Dendritic cell treated with granulocyte-macrophage colony-stimulating factor and Interleukin-4, amounts not matched to agents 40 ng/mL and 50 ng/mL, for 4 days (primary cell): ENCODE measurements at regions of chr14 and their contacts with region 1.

Region 1: DNA sequence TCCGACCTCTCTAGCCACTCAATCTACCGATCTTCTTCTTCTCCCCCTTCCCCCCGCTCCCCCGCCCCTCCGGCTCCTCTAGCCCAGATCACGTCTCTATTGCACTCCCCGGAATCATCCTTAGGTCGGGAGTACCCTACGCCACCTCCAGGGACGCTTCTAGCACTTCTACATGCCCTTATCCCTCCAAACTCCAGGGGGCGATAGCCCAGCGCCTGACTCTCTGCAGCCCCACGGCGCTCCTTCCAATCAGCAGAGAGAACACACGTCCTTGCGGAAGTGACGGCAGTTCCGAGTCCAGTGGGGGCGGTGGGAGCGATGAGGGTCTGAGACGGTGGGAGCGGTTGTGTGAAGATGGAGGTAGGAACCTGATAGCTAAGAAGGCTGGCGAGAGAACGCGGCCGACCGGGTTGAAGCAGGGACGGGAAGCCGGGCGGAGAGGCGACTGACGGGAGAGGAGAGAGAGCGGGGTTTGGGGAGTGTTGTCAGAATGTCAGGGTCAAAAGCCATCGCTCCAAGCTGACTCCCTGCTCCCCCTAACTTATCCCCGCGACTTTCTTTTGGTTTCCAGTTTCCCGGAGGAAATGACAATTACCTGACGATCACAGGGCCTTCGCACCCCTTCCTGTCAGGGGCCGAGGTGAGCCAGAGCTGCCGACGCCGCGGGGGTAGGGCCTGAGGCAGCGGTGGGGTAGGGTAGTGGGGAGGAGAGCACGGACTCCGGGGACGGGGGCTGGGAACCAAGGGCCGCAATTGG is at the starts of genes RAB2B and TOX4:
- H3K4me3 Mint-ChIP-seq: peak within 1 kb of the TSS; percentile 100
- H3K27ac Mint-ChIP-seq: peak within 1 kb of the TSS; percentile 99
- H3K4me1 Mint-ChIP-seq: peaks cover 27% of the 10 kb centered on the region
- H3K27me3 Mint-ChIP-seq: no peaks in the 10 kb centered on the region

Region 2: DNA sequence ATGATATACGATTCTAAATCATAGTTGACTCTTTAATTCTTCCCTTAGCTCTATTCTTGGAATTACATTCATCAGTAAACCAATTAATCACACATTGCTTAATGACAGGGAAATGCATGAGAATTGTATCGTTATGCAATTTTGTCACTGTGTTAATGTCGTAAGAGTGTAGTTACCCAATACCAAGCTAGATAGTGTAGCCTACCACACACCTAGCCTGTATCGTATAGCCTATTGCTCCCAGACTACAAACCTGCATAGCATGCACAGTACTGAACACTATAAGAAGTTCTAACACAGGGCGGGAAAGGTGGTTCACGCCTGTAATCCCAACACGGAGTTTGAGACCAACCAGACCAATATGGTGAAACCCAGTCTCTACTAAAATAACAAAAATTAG is 232.6 kb before region 1 on chr14:
- intact Hi-C with region 1: no loop called
- H3K4me3 Mint-ChIP-seq: no peak overlapping the region
- H3K27ac Mint-ChIP-seq: no peak overlapping the region
- H3K4me1 Mint-ChIP-seq: peaks cover 47% of the 10 kb centered on the region
- H3K27me3 Mint-ChIP-seq: no peaks in the 10 kb centered on the region

Region 3: DNA sequence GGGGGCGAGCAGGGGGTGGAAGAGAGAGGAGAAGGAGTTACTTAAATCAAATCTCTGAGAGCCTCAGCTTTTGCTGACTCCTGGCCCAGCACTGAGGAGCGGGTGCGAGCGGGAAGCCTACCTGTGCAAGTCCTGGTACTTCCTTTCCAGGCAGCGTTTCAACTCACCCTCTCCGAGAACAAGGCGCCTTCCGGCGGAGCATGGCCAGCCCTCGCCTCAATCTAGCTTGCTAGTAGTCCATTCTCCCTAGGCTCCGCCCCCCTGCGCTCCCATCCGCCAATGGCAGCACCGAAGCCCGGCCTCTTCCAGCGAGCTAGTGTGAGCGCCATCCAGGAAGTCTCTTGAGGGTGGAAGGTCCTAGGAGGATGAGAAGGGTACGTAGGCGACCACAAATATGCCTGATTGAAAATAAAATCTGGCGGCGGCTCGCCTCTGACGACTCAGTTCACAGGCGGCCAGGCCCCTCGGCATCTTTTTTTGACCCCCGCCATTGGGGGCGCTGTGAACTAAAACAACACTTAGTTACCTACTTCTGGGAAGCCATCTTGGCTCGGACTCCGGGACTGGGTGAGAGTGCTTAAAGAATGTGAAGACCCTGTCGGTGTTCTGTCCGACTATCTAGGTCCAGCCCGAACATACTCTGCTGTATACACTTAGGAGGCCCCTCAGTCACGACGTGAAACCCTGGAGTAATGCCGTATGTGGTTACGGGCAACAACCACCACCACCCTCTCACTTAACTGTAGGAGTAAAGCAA is 21.0 kb before region 1 on chr14 and contains the start of gene CHD8:
- intact Hi-C with region 1: loop called (anchors 1 kb)
- H3K4me3 Mint-ChIP-seq: peak within 1 kb of the TSS; percentile 90
- H3K27ac Mint-ChIP-seq: peak within 1 kb of the TSS; percentile 97
- H3K4me1 Mint-ChIP-seq: peaks cover 24% of the 10 kb centered on the region
- H3K27me3 Mint-ChIP-seq: no peaks in the 10 kb centered on the region

Region 4: GRCh38 chr14:21510735-21511657 is 33.9 kb after region 1 on chr14 and contains the start of gene METTL3:
- intact Hi-C with region 1: loop called (anchors 1 kb)
- H3K4me3 Mint-ChIP-seq: peak within 1 kb of the TSS; percentile 87
- H3K27ac Mint-ChIP-seq: peak within 1 kb of the TSS; percentile 95
- H3K4me1 Mint-ChIP-seq: peaks cover 18% of the 10 kb centered on the region
- H3K27me3 Mint-ChIP-seq: peaks cover 13% of the 10 kb centered on the region

Region 5: GRCh38 chr14:21536418-21537089 is 59.5 kb after region 1 on chr14:
- intact Hi-C with region 1: no loop called
- H3K4me3 Mint-ChIP-seq: no peak overlapping the region
- H3K27ac Mint-ChIP-seq: no peak overlapping the region
- H3K4me1 Mint-ChIP-seq: peaks cover 6% of the 10 kb centered on the region
- H3K27me3 Mint-ChIP-seq: peaks cover 60% of the 10 kb centered on the region